Posterior vena cava (tissue), 2 donors: ENCODE measurements at regions of chr4 and their contacts with region 1.

Region 1: GRCh38 chr4:7137326-7138200 is 54.8 kb upstream of the SORCS2 start:
- DNase-seq: no peak

Region 2: GRCh38 chr4:6783053-6783981 is 354.2 kb before region 1 on chr4:
- intact Hi-C with region 1: no loop called
- DNase-seq: peak; percentile 97

Region 3: GRCh38 chr4:6917461-6918271 is 219.9 kb before region 1 on chr4:
- intact Hi-C with region 1: no loop called
- DNase-seq: peak; percentile 95

Region 4: DNA sequence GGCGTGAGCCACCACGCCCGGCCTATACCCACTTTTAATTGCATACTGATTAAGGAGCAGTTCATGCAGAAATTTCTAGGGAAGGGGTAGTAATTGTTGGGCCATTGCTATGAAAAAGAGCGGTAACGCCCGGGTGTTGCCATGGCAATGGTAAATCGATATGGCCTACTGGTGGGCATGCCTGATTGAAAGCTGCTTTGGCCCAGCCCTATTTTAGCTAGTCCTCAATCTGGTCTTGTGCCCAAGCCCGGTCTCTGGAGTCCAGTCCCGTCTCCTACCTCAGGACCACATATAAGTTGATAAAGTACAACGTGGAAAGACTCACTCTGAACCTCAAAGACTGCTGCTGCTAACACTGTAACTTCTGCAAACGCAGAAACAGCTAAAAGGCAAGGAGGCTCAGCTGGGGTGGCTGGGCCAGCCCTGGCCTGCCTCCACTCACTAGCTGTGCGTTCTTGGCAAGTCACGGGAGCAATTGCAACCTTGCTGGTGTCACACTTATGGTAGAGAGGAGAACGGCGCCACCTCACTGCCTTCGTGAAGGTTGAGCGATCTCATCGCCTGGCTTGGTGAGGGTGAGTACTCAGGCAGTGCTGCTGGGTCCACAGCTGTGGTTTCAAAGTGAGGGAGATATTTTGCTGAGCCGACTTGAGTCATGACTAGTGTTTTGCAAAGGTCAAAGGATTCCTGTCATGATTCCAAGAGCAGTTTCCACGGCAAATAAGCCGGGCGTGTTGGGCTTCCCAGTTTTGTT is 12.7 kb before region 1 on chr4:
- intact Hi-C with region 1: no loop called
- DNase-seq: peak; percentile 89

Region 5: DNA sequence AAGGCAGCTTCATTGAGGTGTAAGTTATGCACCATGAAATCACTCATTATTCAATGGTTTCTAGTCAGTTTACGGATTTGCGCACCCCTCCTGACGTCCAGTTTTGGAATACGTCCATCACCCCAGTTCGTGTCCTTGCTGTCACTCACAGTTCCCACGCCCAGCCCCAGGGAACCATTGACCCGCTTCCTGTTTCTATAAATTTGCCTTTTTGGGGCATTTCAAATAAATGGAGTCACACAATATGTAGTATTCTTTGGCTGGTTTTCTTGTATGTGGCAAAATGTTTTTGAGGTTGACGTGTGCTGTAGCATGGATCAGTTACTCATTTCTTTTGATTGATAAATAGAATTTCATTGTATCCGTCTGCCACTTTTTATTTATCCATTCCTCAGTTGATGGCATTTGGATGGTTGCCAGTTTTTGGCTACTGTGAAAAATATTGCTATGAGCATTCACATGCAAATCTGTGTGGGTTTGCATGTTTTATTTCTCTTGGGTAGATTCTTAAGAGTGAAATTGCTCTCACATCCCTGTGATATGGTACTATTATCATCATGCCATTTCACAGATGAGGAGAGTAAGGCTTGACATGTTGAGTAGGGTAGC is 36.4 kb after region 1 on chr4:
- intact Hi-C with region 1: loop called in 1 of 2 experiments (anchors 1 kb)
- DNase-seq: peak; percentile 26

Region 6: DNA sequence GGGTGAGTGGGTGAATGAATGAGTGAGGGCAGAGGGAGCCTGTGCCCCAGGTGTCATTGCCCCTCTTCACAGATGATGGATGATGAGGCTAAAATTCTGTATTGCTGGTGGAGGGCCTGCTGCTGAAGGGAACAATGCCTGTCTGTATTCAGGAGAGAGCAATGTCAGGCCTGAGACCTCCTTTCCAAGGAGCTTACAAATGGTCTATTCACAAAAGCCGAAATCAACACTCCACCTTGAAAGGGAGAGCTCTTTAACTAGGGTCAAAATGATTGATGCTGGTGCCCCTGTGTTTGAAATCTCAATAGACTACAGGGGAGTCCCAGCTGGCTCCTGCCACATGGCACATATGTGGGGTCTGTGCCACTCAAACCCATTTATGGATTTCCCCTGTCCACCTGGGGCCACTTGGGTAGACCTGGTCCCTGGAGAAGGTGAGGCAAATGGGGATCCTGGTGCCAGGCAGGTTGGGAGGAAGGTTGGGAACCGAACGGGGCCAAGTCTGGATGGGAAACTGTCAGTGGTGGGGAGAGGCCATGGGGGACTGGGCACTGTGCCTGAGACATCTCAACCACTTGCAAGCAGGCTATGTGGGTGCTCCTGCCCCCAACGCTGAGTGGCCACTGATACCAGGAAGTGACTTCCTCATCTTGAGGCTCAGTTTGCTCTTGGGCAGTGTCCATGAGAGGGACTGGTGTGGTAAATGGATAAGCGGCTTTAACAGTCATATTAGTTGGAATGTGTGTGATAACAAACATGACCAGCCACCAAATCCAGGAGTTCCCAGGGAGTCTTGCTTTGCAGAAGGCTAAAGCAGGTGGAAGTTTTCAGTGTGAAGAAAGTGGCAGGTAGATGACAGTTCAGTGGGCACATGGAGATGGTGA is 521.0 kb after region 1 on chr4:
- intact Hi-C with region 1: no loop called
- DNase-seq: no peak